HepG2 (cell line): ENCODE measurements at regions of chr9 and their contacts with region 1.

Region 1: DNA sequence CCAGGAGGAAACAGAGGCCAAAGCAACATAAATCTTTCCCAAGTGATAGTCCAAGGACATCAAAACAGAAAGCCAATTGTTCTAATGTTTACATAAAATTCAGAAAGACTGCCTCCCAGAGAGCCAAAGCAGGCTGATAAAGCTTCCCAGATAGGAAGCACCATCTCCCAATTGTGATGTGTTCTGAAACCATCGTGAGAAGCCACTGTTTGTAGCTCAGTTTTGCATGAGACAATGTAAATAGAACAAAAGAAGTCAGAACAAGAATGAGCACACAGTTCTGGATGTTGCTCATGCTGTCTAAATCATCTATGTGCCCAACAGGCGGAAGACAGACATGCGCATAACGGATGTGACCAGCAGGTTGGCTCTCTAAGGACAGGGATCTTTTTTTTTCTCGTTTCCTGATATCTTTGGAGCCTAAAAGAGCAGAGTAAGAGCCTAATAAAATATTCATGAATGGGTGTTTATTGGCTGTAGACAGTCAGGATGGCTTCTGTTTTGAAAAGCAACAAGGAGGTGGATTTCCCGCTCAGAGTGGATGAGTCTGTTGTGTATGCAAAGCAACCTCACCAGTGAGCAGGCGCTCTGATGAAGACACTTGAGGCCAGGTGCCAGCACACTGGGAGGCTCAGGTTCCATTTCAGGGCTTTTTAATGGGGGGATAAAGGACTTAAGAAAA is 113.6 kb downstream of the GNA14 start:
- DNase-seq: peak; percentile 96
- ATAC-seq: peak; percentile 96
- H3K4me3 ChIP-seq: peak overlapping the region in 1 of 3 experiments; percentile 9; a peak in 2 of 6 replicates
- H3K27ac ChIP-seq: peak overlapping the region; percentile 54
- H3K4me1 ChIP-seq: peaks cover 42% of the 10 kb centered on the region
- H3K27me3 ChIP-seq: peaks cover 0 to 10% of the 10 kb centered on the region in 2 experiments; a peak in 1 of 5 replicates
- CTCF ChIP-seq: no peak
- EP300 ChIP-seq: peak in 1 of 2 experiments; percentile 82; a peak in 2 of 4 replicates
- POLR2A ChIP-seq: no peak
- RAD21 ChIP-seq: no peak

Region 2: DNA sequence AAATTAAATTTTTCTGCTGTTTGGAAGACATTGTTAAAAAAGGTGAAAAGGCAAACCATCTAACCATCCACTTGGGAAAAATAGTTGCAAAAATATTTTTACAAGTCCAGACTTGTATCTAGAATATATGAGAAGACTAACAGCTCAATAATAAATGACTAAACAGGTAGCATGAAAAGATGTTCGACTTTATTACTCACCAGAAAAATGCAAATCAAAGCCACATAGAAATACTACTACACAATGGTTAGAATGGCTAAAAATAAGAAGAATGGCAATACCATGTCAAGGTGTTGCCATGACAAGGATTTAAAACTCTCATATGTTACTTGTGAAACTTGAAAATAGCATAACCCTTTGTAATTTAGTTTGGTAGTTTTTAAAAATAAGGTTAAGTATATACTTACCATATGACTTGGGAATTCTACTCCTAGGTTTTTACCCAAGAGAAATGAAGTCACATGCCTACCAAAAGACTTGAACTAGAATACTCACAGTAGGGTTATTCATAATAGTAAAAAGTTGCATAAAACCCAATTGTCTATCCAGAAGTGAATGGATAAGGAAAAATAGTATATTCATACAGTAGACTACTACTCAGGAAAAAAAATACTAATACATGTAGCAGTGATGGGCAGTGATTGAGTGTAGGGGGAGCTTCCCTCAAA is 263.4 kb before region 1 on chr9:
- CTCF ChIA-PET with region 1: no interaction called
- POLR2A ChIA-PET with region 1: no interaction called
- in situ Hi-C with region 1: no loop called
- intact Hi-C with region 1: no loop called
- DNase-seq: no peak
- ATAC-seq: no peak
- H3K4me3 ChIP-seq: no peak overlapping the region
- H3K27ac ChIP-seq: no peak overlapping the region
- H3K4me1 ChIP-seq: peaks cover 13% of the 10 kb centered on the region
- H3K27me3 ChIP-seq: no peaks in the 10 kb centered on the region
- CTCF ChIP-seq: no peak
- EP300 ChIP-seq: no peak
- POLR2A ChIP-seq: no peak
- RAD21 ChIP-seq: no peak

Region 3: DNA sequence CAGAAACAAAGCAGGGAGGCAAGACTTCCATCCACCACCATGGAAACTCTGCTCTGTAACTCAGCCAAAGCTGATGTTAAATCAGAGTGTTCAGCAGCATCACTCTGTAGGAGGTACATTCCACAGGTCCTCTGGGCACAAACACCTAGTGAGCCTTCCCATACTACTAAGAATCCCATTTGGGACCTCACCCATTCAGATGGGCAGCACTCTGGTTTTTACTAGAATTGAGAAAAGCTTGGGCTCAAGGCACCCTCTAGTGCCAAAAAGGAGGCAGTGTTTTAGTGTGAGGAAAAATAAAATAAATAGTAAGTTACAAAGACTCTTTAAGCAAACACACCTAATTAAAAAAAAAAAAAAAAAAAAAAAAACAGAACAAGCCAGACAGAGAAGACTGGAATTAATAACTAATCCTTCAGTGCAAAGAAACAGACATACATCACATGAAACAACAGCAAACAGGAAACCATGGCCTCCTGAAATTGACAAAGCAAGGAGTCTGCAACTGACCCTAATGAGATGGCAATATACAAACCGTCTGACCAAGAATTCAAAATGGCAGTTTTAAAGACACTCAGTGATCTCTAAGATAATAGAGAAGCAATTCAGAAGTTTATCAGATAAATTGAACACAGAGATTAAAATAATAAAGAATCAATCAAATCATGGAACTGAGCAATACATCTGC is 45.9 kb before region 1 on chr9:
- CTCF ChIA-PET with region 1: no interaction called
- POLR2A ChIA-PET with region 1: no interaction called
- in situ Hi-C with region 1: no loop called
- intact Hi-C with region 1: loop called (anchors 2 kb)
- DNase-seq: no peak
- ATAC-seq: peak; percentile 55; the same call in 2 of the 3 replicates
- H3K4me3 ChIP-seq: no peak overlapping the region
- H3K27ac ChIP-seq: no peak overlapping the region
- H3K4me1 ChIP-seq: no peaks in the 10 kb centered on the region
- H3K27me3 ChIP-seq: no peaks in the 10 kb centered on the region; a peak in 1 of 5 replicates
- CTCF ChIP-seq: peak; percentile 36; the same call in 1 of the 2 replicates
- EP300 ChIP-seq: no peak
- POLR2A ChIP-seq: no peak
- RAD21 ChIP-seq: no peak

Region 4: GRCh38 chr9:77512876-77513275 is 21.6 kb before region 1 on chr9:
- CTCF ChIA-PET with region 1: no interaction called
- POLR2A ChIA-PET with region 1: no interaction called
- in situ Hi-C with region 1: no loop called
- intact Hi-C with region 1: loop called (anchors 2 kb)
- DNase-seq: peak; percentile 87
- ATAC-seq: peak; percentile 86
- H3K4me3 ChIP-seq: no peak overlapping the region
- H3K27ac ChIP-seq: no peak overlapping the region
- H3K4me1 ChIP-seq: peaks cover 33% of the 10 kb centered on the region
- H3K27me3 ChIP-seq: peaks cover 0 to 13% of the 10 kb centered on the region in 2 experiments; a peak in 4 of 5 replicates
- CTCF ChIP-seq: no peak
- EP300 ChIP-seq: peak in 1 of 2 experiments; percentile 90; a peak in 2 of 4 replicates
- POLR2A ChIP-seq: no peak
- RAD21 ChIP-seq: no peak